ENCODE measurements at regions of chr9 and their contacts with region 1.

Region 1: GRCh38 chr9:104968025-104968982 is 40.3 kb upstream of the ABCA1 start:
- DNase-seq: peak; percentile 95

Region 2: GRCh38 chr9:104927912-104928740 is 40.2 kb before region 1 on chr9 and contains the start of gene ABCA1:
- intact Hi-C with region 1: loop called (anchors 1 kb)
- DNase-seq: peak; percentile 94
- total RNA-seq, gene ABCA1: 5.4 TPM

Measured in cardiac septum (tissue), 1 donor.